ENCODE measurements at regions of chr1 and their contacts with region 1.

Region 1: GRCh38 chr1:39098546-39099250 is 72.5 kb downstream of the NDUFS5 start:
- DNase-seq: peak; percentile 80 to 85
- H3K4me3 ChIP-seq: no peak overlapping the region
- H3K4me1 ChIP-seq: peaks cover 13% of the 10 kb centered on the region
- H3K27me3 ChIP-seq: no peaks in the 10 kb centered on the region

Region 2: DNA sequence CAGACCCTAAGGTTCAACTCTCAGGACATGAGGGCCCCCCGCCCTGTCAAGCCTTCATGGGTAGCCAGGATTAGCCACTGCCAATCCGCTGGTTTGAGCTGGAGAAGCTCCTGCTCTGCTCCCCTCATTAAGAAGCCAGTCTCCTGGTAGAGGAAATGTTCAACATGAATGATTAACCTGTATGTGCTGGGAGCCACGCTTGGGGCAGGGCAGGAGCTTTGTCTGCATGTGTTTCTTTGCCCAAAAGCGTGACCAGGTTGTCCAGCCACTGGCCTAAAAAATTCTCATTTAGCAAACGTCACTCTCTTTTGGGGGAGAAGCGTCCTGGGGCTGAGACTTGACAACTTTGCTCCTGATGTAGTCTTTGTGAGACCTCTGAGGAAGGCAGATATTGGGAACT is 335.6 kb before region 1 on chr1:
- in situ Hi-C with region 1: no loop called
- DNase-seq: no peak
- H3K4me3 ChIP-seq: no peak overlapping the region
- H3K4me1 ChIP-seq: no peaks in the 10 kb centered on the region
- H3K27me3 ChIP-seq: 0 out of 2 replicates have a peak, but pooled peaks cover 3% of the 10 kb centered on the region

Region 3: GRCh38 chr1:38908821-38909220 is 189.9 kb before region 1 on chr1:
- in situ Hi-C with region 1: no loop called
- DNase-seq: no peak
- H3K4me3 ChIP-seq: no peak overlapping the region
- H3K4me1 ChIP-seq: no peaks in the 10 kb centered on the region
- H3K27me3 ChIP-seq: no peaks in the 10 kb centered on the region

Region 4: GRCh38 chr1:39183503-39184353 is 85.0 kb after region 1 on chr1:
- in situ Hi-C with region 1: loop called (anchors 5 kb)
- DNase-seq: peak; percentile 66 to 67
- H3K4me3 ChIP-seq: no peak overlapping the region
- H3K4me1 ChIP-seq: peaks cover 8% of the 10 kb centered on the region
- H3K27me3 ChIP-seq: no peaks in the 10 kb centered on the region

Region 5: GRCh38 chr1:39258146-39258924 is 159.6 kb after region 1 on chr1:
- in situ Hi-C with region 1: loop called (anchors 5 kb)
- DNase-seq: peak; percentile 61 to 79
- H3K4me3 ChIP-seq: no peak overlapping the region
- H3K4me1 ChIP-seq: no peaks in the 10 kb centered on the region
- H3K27me3 ChIP-seq: 0 out of 2 replicates have a peak, but pooled peaks cover 3% of the 10 kb centered on the region

Region 6: DNA sequence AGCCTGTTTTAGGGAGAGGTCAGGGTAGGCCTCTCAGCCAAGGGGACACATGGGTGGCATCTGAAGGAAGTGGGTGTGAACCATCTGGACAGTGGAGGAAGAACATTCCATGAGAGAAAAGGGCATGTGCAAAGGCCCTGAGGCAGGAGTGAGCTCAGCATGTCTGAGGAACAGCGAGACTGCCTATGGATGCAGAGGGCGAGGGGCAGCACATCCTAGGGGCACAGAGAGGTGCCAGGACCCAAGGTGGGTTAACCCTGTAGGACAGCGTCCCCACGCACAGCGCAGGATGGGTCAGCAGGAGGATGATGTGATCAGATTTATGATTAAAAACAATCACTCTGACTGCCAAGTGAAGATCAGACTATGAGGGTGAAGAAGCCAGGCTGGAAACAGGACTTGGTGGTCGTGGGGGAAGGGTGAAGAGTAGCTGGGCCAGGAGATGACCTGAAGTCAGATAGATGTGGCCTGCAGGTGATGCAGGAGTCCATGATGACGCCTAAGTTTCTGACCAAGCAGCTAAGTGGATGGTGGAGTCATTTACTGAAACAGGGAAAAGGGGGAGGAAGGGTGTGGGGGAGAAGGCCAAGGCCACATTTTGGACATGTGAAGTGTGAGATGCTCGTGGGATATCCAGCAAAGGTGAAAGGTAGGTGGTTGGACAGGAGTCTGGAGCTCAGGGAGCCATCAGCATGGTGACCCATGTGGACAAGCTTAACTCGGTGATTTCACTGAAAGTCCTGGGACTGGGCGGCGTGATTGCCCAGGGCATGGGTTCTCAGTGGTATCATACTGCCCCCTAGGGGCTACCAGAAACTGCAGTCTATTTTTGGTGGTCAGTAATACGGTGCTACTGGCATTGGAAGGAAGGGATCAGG is 440.1 kb after region 1 on chr1:
- in situ Hi-C with region 1: loop called (anchors 5 kb)
- DNase-seq: peak; percentile 56 to 75
- H3K4me3 ChIP-seq: no peak overlapping the region
- H3K4me1 ChIP-seq: no peaks in the 10 kb centered on the region
- H3K27me3 ChIP-seq: no peaks in the 10 kb centered on the region